Activated CD4-positive, alpha-beta memory T cell treated with anti-CD3 and anti-CD28 coated beads for 36 hours (primary cell): ENCODE measurements at regions of chr9 and their contacts with region 1.

Region 1: GRCh38 chr9:98263482-98264357 is 8.3 kb upstream of the TBC1D2 start:
- DNase-seq: peak; percentile 90
- H3K4me3 Mint-ChIP-seq: no peak overlapping the region
- H3K27ac Mint-ChIP-seq: peak overlapping the region; percentile 39
- H3K4me1 Mint-ChIP-seq: no peaks in the 10 kb centered on the region
- H3K27me3 Mint-ChIP-seq: peaks cover 3% of the 10 kb centered on the region

Region 2: DNA sequence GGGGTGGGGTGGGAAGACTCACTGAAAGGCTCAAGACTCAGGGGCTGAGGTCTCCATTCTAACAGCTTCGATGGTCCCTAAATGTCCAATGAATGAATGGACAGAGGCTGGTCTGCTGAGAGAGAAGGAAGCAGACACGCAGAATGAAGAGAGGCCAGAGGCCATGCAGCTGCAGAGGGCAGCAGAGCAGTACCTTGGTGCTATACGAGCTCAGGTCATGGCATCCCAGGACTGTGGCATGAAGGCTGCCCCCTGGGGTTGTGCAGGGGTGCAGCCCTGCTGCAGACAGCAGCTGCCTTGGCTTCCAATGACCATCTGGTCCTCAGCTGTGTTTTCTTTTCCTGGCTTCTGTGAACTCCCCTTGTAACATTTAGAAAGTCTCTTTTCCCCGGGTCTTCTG is 56.1 kb before region 1 on chr9:
- CTCF ChIA-PET with region 1: interaction called, 47 read pairs
- POLR2A ChIA-PET with region 1: no interaction called
- intact Hi-C with region 1: loop called (anchors 1 kb)
- DNase-seq: no peak
- H3K4me3 Mint-ChIP-seq: no peak overlapping the region
- H3K27ac Mint-ChIP-seq: no peak overlapping the region
- H3K4me1 Mint-ChIP-seq: peaks cover 2% of the 10 kb centered on the region
- H3K27me3 Mint-ChIP-seq: no peaks in the 10 kb centered on the region

Region 3: DNA sequence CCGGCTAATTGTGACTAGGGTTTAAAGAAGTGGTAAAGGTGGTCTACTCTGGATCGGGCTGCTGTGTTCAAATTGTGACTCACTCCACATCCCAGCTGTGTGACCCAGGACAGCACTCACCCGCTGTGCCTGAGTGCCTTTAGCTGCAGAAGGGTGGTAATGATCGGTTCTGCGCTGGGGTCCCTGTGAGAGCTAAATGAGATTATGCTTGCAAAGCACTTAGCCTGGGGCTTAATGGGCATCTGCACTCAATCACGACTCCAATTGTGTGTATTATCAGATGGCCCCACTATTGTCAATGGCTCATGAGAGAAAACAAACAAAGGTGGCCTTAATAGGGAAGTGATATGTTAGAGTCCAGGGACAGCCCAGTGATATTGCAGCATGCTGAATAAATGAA is 16.9 kb after region 1 on chr9:
- CTCF ChIA-PET with region 1: no interaction called
- POLR2A ChIA-PET with region 1: no interaction called
- intact Hi-C with region 1: no loop called
- DNase-seq: no peak
- H3K4me3 Mint-ChIP-seq: no peak overlapping the region
- H3K27ac Mint-ChIP-seq: no peak overlapping the region
- H3K4me1 Mint-ChIP-seq: no peaks in the 10 kb centered on the region
- H3K27me3 Mint-ChIP-seq: peaks cover 5% of the 10 kb centered on the region

Region 4: DNA sequence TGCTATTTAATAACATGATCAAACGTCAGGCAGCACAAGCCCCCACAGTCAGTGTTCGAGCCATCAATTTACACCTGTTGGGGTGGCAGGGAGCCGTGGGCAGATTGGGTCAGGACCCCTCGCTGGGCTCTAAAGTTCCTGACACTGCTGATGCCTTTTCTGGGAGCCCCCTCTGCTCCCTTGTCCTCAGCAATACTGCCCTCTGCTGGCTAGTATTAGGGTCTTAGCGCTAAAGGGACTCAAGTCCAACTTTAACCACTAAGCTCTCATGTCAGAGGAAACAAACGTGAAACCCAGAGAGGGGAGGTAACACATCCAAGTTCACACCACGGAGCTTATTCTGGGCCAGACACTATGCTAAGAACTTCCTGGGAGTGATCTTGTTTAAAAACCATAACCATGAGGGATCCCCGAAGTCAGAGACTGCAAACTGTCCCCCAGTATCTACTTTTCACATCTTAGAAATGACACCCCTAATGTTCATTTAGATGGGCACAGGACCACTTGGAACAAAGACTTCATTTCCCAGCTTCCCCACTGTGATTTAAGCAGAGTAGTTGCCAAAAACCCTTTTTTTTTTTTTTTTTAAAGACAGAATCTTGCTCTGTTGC is 512.2 kb after region 1 on chr9:
- CTCF ChIA-PET with region 1: no interaction called
- POLR2A ChIA-PET with region 1: no interaction called
- intact Hi-C with region 1: no loop called
- DNase-seq: peak; percentile 30
- H3K4me3 Mint-ChIP-seq: no peak overlapping the region
- H3K27ac Mint-ChIP-seq: no peak overlapping the region
- H3K4me1 Mint-ChIP-seq: no peaks in the 10 kb centered on the region
- H3K27me3 Mint-ChIP-seq: no peaks in the 10 kb centered on the region